Mammary epithelial cell (primary cell): ENCODE measurements at regions of chr16 and their contacts with region 1.

Region 1: GRCh38 chr16:3112058-3112880 is at the start of gene ZNF205:
- DNase-seq: peak; percentile 71
- H3K4me3 ChIP-seq: peak within 1 kb of the TSS; percentile 86 to 95 (median 93)
- H3K27ac ChIP-seq: peak within 1 kb of the TSS; percentile 6
- H3K4me1 ChIP-seq: peaks cover 9% of the 10 kb centered on the region
- H3K27me3 ChIP-seq: no peaks in the 10 kb centered on the region
- CTCF ChIP-seq: no peak
- total RNA-seq, gene ZNF205: 14.8 to 19.2 TPM

Region 2: DNA sequence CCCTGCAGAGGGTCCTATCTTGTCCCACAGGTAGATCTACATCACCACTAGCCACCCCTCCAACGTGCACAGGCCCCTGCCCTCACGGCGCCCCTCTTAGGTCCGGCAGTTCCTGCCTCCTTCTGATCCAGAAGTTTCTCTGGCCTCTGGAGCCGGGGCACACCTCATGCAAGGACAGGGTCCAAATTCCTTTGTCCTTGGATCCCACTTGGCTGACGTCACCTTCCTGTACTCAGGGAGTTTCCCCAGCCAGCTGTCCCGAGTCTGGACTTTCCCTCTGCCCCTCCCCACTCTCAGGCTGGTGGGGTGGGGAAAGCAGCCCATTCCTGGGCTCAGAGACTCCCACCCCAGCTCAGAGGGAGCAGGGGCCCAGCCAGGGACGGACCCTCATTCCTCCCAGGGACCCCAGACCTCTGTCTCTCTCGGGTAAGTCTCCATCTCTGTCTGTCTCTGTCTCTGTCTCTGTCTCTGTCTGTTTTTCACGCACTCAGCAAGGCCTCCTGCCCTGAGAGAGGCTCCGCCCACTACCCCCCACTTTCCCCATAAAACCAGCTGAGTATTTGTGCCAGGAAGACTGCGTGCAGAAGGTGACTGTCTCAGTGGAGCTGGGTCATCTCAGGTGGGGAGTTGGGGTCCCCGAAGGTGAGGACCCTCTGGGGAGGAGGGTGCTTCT is 47.1 kb before region 1 on chr16 and contains the start of gene IL32:
- CTCF ChIA-PET with region 1: no interaction called
- dilution Hi-C with region 1: loop called (anchors 5 kb)
- in situ Hi-C with region 1: no loop called
- intact Hi-C with region 1: no loop called
- DNase-seq: peak; percentile 84
- H3K4me3 ChIP-seq: no peak within 1 kb of the TSS
- H3K27ac ChIP-seq: peak within 1 kb of the TSS; percentile 38
- H3K4me1 ChIP-seq: peaks cover 10% of the 10 kb centered on the region
- H3K27me3 ChIP-seq: no peaks in the 10 kb centered on the region
- CTCF ChIP-seq: no peak
- total RNA-seq, gene IL32: 1.5 to 25.2 TPM

Region 3: DNA sequence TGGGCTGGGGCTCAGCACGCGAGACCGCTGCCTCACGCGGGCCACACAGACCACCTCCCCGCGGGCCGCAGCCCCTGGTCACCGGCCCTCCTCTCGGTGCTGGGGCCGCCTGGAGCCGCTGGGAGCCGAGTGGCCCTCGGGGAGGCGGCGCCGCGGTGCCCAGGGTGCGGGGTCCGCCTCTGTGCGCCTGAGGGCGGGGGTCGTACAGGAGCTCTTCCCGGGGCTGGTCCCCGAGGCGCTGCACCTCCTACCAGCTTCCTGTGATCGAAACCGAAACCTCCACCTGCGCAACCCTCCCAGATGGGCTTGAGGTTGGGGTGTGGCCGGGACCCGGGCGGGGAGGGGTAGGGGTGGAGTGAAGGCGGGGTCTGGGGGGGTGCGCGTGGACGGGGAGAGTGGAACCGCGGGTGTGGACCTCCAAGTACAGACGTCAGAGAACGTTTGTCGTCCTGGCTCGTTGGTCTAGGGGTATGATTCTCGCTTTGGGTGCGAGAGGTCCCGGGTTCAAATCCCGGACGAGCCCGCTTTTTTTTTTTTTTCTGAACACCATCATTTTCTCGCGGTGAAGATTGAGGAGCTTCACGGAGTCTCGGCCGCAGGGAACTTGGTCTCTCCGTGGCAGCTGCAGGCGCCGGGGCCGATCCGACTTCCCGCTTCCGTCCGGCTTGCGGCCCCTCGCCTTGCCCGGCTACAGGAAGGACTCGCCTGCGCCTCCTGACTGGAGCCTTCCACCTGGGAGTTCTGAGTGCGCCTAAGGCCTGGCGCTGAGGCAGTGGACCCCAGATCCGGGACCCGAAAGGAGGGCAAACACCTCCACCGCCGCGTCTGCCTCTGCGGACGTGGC is 46.4 kb after region 1 on chr16:
- CTCF ChIA-PET with region 1: no interaction called
- dilution Hi-C with region 1: no loop called
- in situ Hi-C with region 1: no loop called
- intact Hi-C with region 1: loop called (anchors 1 kb)
- DNase-seq: peak; percentile 93
- H3K4me3 ChIP-seq: peak overlapping the region; percentile 79 to 90 (median 83)
- H3K27ac ChIP-seq: peak overlapping the region; percentile 91
- H3K4me1 ChIP-seq: peaks cover 11% of the 10 kb centered on the region
- H3K27me3 ChIP-seq: no peaks in the 10 kb centered on the region
- CTCF ChIP-seq: no peak